SK-N-SH (cell line): ENCODE measurements at regions of chr16 and their contacts with region 1.

Region 1: GRCh38 chr16:67546761-67547422 is 15.4 kb upstream of the CTCF start:
- DNase-seq: peak; percentile 91
- H3K4me3 ChIP-seq: peak overlapping the region in 1 of 2 experiments; percentile 27; a peak in 1 of 4 replicates
- H3K27ac ChIP-seq: no peak overlapping the region; a peak in 1 of 4 replicates
- H3K4me1 ChIP-seq: no peaks in the 10 kb centered on the region
- H3K27me3 ChIP-seq: no peaks in the 10 kb centered on the region
- CTCF ChIP-seq: peak; percentile 85
- EP300 ChIP-seq: no peak
- RAD21 ChIP-seq: peak; percentile 84

Region 2: DNA sequence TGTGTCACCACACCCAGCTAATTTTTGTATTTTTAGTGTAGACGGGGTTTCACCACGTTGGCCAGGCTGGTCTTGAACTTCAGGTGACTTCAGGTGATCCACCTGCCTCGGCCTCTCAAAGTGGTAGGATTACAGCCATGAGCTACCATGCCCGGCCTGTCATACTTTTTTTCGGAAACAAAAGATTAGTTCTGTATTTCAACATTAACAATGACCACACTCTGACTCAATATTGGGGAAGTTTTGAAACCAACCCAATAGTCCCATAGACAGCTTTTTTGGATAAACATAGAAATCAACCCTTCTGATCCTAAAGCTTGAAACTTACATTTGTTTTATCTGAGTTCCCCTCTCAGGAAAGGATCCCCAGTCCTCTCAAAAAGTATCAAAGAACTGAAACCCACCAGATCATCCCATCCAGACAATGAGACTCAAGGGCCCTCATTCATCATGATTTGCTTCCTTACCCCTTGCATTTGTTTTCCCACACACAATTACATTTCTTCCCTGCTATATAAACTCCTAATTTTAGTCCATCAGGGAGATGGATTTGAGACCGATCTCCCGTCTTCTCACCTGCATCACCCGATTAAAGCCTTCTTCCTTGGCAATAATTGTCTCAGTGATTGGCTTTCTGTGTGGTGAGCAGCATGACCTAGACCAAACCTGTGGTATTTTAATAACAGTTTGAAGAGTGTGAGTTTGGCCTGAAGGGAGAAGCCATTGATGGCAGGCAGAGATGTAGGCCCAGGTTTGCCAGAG is 56.4 kb before region 1 on chr16:
- CTCF ChIA-PET with region 1: interaction called, 15 read pairs
- POLR2A ChIA-PET with region 1: no interaction called
- DNase-seq: no peak
- H3K4me3 ChIP-seq: no peak overlapping the region
- H3K27ac ChIP-seq: no peak overlapping the region; a peak in 1 of 4 replicates
- H3K4me1 ChIP-seq: peaks cover 0 to 6% of the 10 kb centered on the region in 2 experiments; a peak in 1 of 4 replicates
- H3K27me3 ChIP-seq: no peaks in the 10 kb centered on the region
- CTCF ChIP-seq: no peak
- EP300 ChIP-seq: no peak
- RAD21 ChIP-seq: no peak

Region 3: DNA sequence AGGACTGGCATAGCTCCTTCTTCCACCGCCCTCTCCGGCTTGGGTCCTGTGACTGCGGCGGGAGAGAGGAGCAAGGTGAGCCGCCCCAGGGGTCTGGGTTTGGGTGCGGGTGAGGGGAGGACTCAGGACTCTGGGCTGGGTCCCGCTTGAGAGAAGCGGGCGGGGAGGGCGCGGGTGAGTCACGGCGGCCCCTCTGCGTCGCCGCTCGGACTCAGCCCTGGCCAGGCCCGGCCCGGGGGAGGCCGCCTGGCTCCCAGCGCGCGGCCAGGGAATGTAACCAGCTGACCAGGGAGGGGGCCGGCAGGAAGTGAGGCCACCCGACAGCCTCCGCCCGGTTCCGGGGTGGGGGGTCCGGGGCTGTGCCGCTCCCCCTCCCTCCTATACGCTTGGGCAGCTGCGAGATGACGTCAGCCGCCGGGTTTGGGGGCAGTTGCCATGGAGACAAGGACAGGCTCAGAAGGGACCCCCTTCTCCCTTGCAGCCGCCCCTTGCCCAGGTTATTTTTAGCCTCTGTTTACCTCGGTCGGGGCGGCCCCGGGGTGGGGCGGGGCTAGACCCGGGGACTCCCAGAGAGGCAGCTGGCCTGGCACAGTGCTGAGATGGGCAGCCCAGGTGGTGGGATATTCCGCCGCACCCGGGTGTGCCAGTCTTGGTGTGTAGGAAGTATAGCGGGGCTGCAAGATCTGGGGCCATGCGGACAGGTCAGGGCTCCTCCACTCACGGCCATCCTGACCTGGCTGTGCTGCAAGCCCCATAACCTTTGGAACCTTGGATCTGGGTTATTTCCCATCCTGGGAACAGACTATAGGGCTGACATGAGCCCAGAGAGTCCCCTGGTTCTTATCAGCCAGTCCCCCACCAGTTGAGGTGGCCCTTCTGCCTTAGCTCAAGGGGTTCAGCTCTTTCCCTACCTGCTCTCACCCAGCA is 16.6 kb before region 1 on chr16:
- CTCF ChIA-PET with region 1: interaction called, 60 read pairs
- POLR2A ChIA-PET with region 1: no interaction called
- DNase-seq: peak; percentile 89
- H3K4me3 ChIP-seq: peak overlapping the region; percentile 77 to 99
- H3K27ac ChIP-seq: peak overlapping the region; percentile 83; a peak in 3 of 4 replicates
- H3K4me1 ChIP-seq: peaks cover 21% of the 10 kb centered on the region in 2 experiments; a peak in 3 of 4 replicates
- H3K27me3 ChIP-seq: no peaks in the 10 kb centered on the region
- CTCF ChIP-seq: no peak
- EP300 ChIP-seq: 0 out of 4 replicates have a peak, but pooled peaks of 1 of the 2 experiments have one; percentile 6
- RAD21 ChIP-seq: no peak

Region 4: GRCh38 chr16:67653128-67653786 is 106.4 kb after region 1 on chr16:
- CTCF ChIA-PET with region 1: interaction called, 263 read pairs
- POLR2A ChIA-PET with region 1: interaction called, 4 read pairs
- DNase-seq: peak; percentile 89
- H3K4me3 ChIP-seq: peak overlapping the region; percentile 64 to 82
- H3K27ac ChIP-seq: peak overlapping the region in 1 of 2 experiments; percentile 64; a peak in 1 of 4 replicates
- H3K4me1 ChIP-seq: peaks cover 0 to 10% of the 10 kb centered on the region in 2 experiments; a peak in 1 of 4 replicates
- H3K27me3 ChIP-seq: no peaks in the 10 kb centered on the region
- CTCF ChIP-seq: peak; percentile 42; the same call in 1 of the 2 replicates
- EP300 ChIP-seq: no peak
- RAD21 ChIP-seq: no peak

Region 5: DNA sequence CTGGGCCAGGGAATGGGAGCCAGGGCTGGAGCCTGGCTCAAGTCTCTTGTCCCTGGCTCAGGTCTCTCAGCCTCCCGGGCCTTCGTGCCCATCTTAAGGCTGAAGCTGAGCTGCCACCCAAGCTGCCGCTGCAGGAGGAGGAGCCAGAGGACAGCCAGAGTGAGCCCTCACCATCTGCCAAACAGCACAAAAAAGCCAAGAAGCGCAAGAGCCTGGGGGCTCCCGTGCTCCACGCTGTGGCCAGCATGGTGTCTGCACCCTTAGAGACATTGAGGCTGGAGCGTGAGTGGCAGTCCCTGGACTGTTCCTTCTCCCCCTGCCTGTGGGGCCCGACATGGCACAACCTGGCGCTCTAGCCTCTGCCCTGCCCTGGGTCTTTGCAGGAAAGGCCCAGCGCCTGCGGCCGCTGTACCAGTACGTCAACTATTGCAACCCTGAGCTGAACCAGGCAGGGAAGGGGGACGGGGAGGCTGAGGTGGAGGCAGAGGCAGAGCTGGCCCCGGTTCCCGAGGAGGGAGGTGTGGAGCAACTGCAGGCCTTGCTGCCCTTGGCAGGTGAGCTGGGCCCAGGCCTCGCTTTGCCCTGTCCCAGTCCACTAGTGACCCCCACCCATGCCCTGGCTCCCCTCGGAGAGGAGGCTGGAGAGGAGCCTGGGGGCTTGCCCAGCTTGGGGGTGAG is 121.1 kb after region 1 on chr16:
- CTCF ChIA-PET with region 1: interaction called, 14 read pairs
- POLR2A ChIA-PET with region 1: no interaction called
- DNase-seq: peak; percentile 95
- H3K4me3 ChIP-seq: peak overlapping the region; percentile 19 to 67; a peak in 2 of 4 replicates
- H3K27ac ChIP-seq: peak overlapping the region; percentile 56 to 86; a peak in 3 of 4 replicates
- H3K4me1 ChIP-seq: peaks cover 12 to 31% of the 10 kb centered on the region in 2 experiments; a peak in 2 of 4 replicates
- H3K27me3 ChIP-seq: no peaks in the 10 kb centered on the region
- CTCF ChIP-seq: peak; percentile 82
- EP300 ChIP-seq: no peak
- RAD21 ChIP-seq: peak; percentile 74